Astrocyte of the cerebellum (primary cell): ENCODE measurements at regions of chr21 and their contacts with region 1.

Region 1: DNA sequence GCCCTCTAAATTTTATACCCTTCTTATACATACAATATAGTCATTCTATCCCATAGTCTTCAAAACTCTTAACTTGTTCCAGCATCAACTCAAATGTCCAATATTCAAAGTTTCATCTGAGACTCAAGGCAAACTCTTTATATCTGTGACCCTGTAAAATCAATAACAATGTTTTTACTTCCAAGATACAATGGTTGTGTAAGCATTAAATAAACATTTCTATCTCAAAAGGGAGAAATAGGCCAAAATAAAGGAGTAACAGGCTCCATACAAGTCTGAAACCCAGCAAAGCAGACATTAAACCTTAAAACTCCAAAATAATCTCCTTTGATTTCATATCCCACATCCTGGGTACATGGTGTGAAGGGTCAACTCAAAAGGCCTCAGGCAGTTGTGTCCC is 1299.1 kb downstream of the MRPL39 start:
- DNase-seq: no peak
- H3K4me3 ChIP-seq: no peak overlapping the region
- CTCF ChIP-seq: no peak

Region 2: DNA sequence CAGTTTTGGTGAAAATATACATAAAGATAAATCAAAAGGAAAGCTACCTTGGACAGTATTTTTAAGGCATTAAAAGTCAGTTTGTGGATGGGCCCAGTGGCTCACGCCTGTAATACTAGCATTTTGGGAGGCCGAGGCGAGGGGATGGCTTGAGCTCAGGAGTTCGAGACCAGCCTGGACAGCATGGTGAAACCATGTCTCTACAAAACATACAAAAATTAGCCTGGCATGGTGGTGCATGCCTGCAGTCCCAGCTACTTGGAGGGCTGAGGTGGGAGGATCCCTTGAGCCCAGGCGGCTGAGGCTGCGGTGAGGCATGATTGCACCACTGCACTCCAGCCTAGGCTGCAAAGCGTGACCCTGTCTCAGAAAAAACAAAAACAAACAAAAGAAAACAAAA is 45.3 kb after region 1 on chr21:
- in situ Hi-C with region 1: loop called (anchors 5 kb)
- DNase-seq: no peak
- H3K4me3 ChIP-seq: no peak overlapping the region
- CTCF ChIP-seq: no peak